OCI-LY7 (cell line): ENCODE measurements at regions of chr4 and their contacts with region 1.

Region 1: DNA sequence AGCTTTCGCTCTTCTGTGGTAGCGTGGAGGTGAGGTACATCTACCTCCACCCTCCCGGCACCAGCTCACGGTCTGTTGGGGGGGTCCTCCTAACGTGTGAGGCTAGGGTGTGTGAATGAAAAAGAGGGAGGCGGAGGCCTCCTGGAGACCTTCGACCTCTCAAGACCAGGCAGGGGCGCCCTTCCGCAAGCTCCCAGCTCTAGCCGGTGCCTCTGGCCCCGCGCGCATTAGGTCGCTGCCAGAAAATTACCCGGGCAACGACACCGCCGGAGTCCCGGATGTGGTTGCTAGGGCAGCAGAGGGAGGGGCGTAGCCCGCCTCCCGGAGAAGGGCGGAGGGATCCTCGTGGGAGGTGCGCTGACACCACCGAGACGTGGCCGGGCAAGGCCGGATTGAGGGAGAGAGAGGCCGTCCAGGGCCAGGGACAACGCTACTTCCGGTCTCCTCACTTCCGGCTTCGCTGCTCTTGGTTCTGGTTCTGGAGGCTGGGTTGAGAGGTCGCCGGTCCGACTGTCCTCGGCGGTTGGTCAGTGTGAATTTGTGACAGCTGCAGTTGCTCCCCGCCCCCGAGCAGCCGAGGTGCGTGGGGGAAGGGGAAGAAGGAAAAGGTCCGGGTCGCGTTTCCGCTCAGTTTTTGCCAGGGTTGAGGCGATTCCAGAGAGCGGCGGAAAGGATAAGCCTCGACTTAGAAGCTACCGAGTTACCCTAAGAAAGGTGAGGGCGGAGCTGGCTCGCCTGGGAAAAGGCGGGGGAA is at the starts of genes ARFIP1 and TIGD4:
- DNase-seq: peak; percentile 96
- H3K4me3 ChIP-seq: peak within 1 kb of the TSS; percentile 79
- H3K27ac ChIP-seq: peak within 1 kb of the TSS; percentile 31
- H3K4me1 ChIP-seq: peaks cover 44% of the 10 kb centered on the region
- CTCF ChIP-seq: peak; percentile 73
- total RNA-seq, gene ARFIP1: 24.8 and 29.3 TPM in 2 replicates
- total RNA-seq, gene TIGD4: 1.1 and 1.5 TPM in 2 replicates

Region 2: GRCh38 chr4:152454398-152455011 is 325.2 kb before region 1 on chr4:
- CTCF ChIA-PET with region 1: no interaction called
- POLR2A ChIA-PET with region 1: interaction called, 5 read pairs
- intact Hi-C with region 1: loop called (anchors 5 kb)
- DNase-seq: peak; percentile 47
- H3K4me3 ChIP-seq: no peak overlapping the region
- H3K27ac ChIP-seq: no peak overlapping the region
- H3K4me1 ChIP-seq: peaks cover 35% of the 10 kb centered on the region
- CTCF ChIP-seq: peak; percentile 95

Region 3: DNA sequence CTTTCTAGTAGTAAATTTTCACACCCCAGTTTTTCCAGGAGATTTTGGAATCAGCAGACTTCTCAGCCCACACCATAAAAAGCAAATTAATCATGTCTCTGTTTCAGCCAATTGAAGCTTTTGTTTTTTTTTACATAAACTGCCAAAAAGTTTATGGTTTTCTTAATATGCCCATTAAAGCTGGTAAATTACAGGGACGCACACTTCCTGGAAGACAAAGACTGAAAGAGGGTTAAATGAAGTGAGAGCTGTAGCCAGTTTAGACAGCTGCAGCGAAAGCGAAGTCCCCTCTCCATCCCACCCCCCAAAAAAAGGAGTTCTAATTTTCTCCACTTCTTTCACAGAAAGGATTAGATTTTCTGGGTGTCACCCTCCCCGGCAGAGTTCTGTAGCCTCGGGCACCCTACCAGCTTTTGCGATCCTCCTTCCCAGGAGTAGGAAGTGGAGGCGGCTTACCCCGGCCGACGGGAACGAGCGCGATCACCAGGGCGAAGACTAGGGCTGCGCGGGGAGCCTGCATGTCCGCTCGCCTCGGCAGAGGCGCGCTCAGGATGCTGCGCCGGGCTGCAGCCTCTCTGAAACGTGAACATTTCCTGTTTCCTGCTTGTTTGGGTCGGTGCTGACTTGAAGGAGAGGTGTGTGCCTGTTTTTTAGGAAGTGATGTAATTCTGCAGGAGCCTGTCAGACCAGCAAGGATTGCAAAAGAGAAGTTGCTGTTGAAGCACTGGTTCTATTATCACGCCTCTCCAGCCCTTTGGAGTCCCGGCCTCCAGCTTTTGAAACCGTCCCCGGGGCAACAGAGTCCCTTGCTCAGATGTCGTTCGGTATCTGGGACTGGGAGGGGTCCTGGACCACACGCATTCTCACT is 100.0 kb before region 1 on chr4 and contains the start of gene TMEM154:
- CTCF ChIA-PET with region 1: no interaction called
- POLR2A ChIA-PET with region 1: interaction called, 6 read pairs
- intact Hi-C with region 1: loop called (anchors 2 kb)
- DNase-seq: peak; percentile 91
- H3K4me3 ChIP-seq: peak within 1 kb of the TSS; percentile 72
- H3K27ac ChIP-seq: peak within 1 kb of the TSS; percentile 63
- H3K4me1 ChIP-seq: peaks cover 85% of the 10 kb centered on the region
- CTCF ChIP-seq: no peak
- total RNA-seq, gene TMEM154: 16.1 and 17.6 TPM in 2 replicates

Region 4: DNA sequence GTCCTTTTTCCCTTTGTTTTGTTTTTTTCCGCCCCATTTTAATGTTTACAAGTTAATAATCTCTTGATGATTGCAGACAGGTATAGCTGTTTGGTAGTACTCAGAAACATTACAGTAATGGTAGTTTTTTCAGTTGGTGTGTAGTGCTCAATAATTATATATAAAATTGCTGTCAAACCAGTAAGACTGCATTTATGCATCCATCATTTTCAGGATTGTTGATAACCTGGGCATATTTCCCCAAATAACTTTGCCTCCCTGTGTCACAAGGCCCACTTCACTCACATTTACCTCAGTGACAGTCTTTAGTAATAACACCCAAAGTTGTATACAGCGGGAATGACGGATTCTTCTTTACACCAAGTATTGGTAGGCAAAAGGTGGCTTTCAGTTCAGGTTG is 16.2 kb after region 1 on chr4:
- CTCF ChIA-PET with region 1: no interaction called
- POLR2A ChIA-PET with region 1: interaction called, 13 read pairs
- intact Hi-C with region 1: no loop called
- DNase-seq: no peak
- H3K4me3 ChIP-seq: no peak overlapping the region
- H3K27ac ChIP-seq: no peak overlapping the region
- H3K4me1 ChIP-seq: no peaks in the 10 kb centered on the region
- CTCF ChIP-seq: no peak